ENCODE measurements at regions of chr11 and their contacts with region 1.

Region 1: GRCh38 chr11:111841370-111842053 is 29.9 kb downstream of the ALG9 start:
- DNase-seq: peak; percentile 67 to 92 (median 74)
- ATAC-seq: peak; percentile 99
- H3K4me3 ChIP-seq: no peak overlapping the region
- H3K27ac ChIP-seq: no peak overlapping the region
- H3K4me1 ChIP-seq: peaks cover 0 to 3% of the 10 kb centered on the region in 2 experiments; a peak in 2 of 5 replicates
- H3K27me3 ChIP-seq: no peaks in the 10 kb centered on the region
- CTCF ChIP-seq: peak; percentile 88 to 93 (median 91)
- EP300 ChIP-seq: peak; percentile 30
- POLR2A ChIP-seq: no peak
- RAD21 ChIP-seq: peak; percentile 91 to 97

Region 2: GRCh38 chr11:111454561-111455192 is 386.8 kb before region 1 on chr11:
- CTCF ChIA-PET with region 1: interaction called, 3 read pairs
- POLR2A ChIA-PET with region 1: no interaction called
- in situ Hi-C with region 1: loop called (anchors 10 kb)
- intact Hi-C with region 1: loop called (anchors 1 kb)
- DNase-seq: peak; percentile 65 to 80 (median 78)
- ATAC-seq: peak; percentile 92
- H3K4me3 ChIP-seq: no peak overlapping the region
- H3K27ac ChIP-seq: no peak overlapping the region
- H3K4me1 ChIP-seq: peaks cover 0 to 6% of the 10 kb centered on the region in 2 experiments; a peak in 1 of 5 replicates
- H3K27me3 ChIP-seq: peaks cover 3 to 50% of the 10 kb centered on the region in 2 experiments; a peak in 4 of 5 replicates
- CTCF ChIP-seq: peak; percentile 28 to 59 (median 56); a peak in 4 of 6 replicates
- EP300 ChIP-seq: no peak
- POLR2A ChIP-seq: no peak
- RAD21 ChIP-seq: peak in 1 of 2 experiments; percentile 44; a peak in 2 of 4 replicates

Region 3: GRCh38 chr11:111565114-111565720 is 276.3 kb before region 1 on chr11:
- CTCF ChIA-PET with region 1: interaction called, 16 read pairs
- POLR2A ChIA-PET with region 1: no interaction called
- in situ Hi-C with region 1: no loop called
- intact Hi-C with region 1: loop called (anchors 1 kb)
- DNase-seq: peak; percentile 62 to 77 (median 70)
- ATAC-seq: peak; percentile 80
- H3K4me3 ChIP-seq: no peak overlapping the region
- H3K27ac ChIP-seq: no peak overlapping the region
- H3K4me1 ChIP-seq: no peaks in the 10 kb centered on the region; a peak in 1 of 5 replicates
- H3K27me3 ChIP-seq: no peaks in the 10 kb centered on the region; a peak in 1 of 5 replicates
- CTCF ChIP-seq: peak; percentile 72 to 89 (median 76)
- EP300 ChIP-seq: 0 out of 2 replicates have a peak, but pooled peaks have one; percentile 17
- POLR2A ChIP-seq: no peak
- RAD21 ChIP-seq: peak; percentile 82 to 86

Region 4: DNA sequence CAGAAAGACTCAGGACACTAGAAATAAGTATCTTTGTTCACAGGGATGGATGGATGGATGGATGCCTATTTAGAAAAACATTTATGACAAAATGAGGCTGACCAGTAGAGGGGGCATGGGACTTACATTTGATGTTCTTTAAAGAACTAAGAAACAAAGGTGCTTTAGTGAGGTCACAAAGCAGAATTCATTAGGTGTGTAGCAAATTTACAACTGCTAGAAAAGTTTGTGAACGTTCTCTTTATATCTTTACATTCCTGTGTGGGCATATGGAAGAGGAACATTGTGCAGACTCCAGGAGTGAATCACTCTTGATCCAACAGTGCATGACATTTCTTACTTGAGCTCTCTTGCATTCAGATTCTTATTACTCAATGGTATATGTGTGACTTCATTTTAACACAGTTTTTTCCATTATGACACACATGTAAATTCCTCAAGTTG is 255.1 kb before region 1 on chr11:
- CTCF ChIA-PET with region 1: interaction called, 31 read pairs
- POLR2A ChIA-PET with region 1: no interaction called
- in situ Hi-C with region 1: no loop called
- intact Hi-C with region 1: loop called (anchors 1 kb)
- DNase-seq: peak; percentile 25 to 64 (median 39)
- ATAC-seq: peak; percentile 75
- H3K4me3 ChIP-seq: no peak overlapping the region
- H3K27ac ChIP-seq: no peak overlapping the region
- H3K4me1 ChIP-seq: no peaks in the 10 kb centered on the region
- H3K27me3 ChIP-seq: 0 out of 5 replicates have a peak, but pooled peaks cover 0 to 2% of the 10 kb centered on the region in 2 experiments
- CTCF ChIP-seq: peak; percentile 44 to 73 (median 69); a peak in 5 of 6 replicates
- EP300 ChIP-seq: no peak
- POLR2A ChIP-seq: no peak
- RAD21 ChIP-seq: peak; percentile 59 to 81

Region 5: DNA sequence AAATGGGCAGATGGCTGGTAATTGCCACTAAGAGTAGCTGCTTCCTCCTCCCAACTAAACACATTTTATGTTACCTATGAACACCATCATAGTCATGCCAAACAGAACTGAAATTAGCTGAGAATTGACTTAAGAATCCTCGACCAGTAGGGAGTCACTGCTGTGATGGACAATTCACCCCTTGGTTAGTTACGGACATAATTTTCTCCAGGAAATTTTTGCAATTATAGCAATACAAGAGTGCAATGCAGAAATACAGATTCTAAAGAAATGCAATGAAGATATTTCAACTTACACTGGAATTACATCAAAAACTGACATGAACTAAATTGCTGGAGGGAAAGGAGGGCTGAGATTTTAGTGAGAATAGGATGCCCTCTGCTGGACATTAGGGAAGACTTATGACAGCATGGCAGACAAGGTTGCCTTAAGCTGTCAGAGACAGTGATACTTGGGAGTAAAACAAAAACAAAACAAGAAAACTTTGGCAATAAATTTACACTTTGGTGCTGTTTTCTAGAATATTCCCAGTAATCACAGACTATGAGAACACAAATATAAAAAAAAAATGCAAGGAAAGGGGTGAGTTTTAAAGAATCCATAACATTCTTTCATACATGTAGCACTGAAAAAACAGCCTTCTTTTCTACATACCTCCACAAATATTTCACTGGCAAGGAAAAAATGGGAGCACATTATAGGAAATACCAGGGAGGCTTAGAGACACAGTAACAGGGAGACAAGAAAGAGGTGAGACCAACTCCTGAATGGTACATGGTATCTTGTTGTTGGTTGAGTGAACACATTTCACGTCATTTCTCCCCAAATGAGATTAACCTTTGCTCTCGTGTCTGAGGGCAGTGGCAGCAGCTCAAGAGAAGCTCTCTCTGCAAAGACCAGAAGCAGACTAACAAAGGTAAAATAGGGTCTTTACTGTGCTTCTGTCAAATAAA is 64.1 kb before region 1 on chr11:
- CTCF ChIA-PET with region 1: interaction called, 13 read pairs
- POLR2A ChIA-PET with region 1: no interaction called
- in situ Hi-C with region 1: no loop called
- intact Hi-C with region 1: loop called (anchors 1 kb)
- DNase-seq: peak; percentile 59 to 77 (median 65)
- ATAC-seq: peak; percentile 97
- H3K4me3 ChIP-seq: no peak overlapping the region
- H3K27ac ChIP-seq: 0 out of 3 replicates have a peak overlapping the region, but pooled peaks have one; percentile 6
- H3K4me1 ChIP-seq: no peaks in the 10 kb centered on the region
- H3K27me3 ChIP-seq: no peaks in the 10 kb centered on the region
- CTCF ChIP-seq: peak; percentile 71 to 90 (median 75)
- EP300 ChIP-seq: no peak
- POLR2A ChIP-seq: no peak
- RAD21 ChIP-seq: peak; percentile 95 to 97

Region 6: GRCh38 chr11:112156956-112157766 is 315.6 kb after region 1 on chr11:
- CTCF ChIA-PET with region 1: no interaction called
- POLR2A ChIA-PET with region 1: no interaction called
- in situ Hi-C with region 1: no loop called
- intact Hi-C with region 1: no loop called
- DNase-seq: no peak
- ATAC-seq: no peak
- H3K4me3 ChIP-seq: no peak overlapping the region
- H3K27ac ChIP-seq: no peak overlapping the region
- H3K4me1 ChIP-seq: peaks cover 4 to 6% of the 10 kb centered on the region in 2 experiments; a peak in 2 of 5 replicates
- H3K27me3 ChIP-seq: no peaks in the 10 kb centered on the region
- CTCF ChIP-seq: no peak
- EP300 ChIP-seq: no peak
- POLR2A ChIP-seq: no peak
- RAD21 ChIP-seq: no peak

Measured in K562 (cell line).